Activated CD4-positive, alpha-beta memory T cell treated with anti-CD3 and anti-CD28 coated beads, Interleukin-2, amount 10 ng/mL, durations not matched to agents 7 days and 5 days (primary cell): ENCODE measurements at regions of chr3 and their contacts with region 1.

Region 1: DNA sequence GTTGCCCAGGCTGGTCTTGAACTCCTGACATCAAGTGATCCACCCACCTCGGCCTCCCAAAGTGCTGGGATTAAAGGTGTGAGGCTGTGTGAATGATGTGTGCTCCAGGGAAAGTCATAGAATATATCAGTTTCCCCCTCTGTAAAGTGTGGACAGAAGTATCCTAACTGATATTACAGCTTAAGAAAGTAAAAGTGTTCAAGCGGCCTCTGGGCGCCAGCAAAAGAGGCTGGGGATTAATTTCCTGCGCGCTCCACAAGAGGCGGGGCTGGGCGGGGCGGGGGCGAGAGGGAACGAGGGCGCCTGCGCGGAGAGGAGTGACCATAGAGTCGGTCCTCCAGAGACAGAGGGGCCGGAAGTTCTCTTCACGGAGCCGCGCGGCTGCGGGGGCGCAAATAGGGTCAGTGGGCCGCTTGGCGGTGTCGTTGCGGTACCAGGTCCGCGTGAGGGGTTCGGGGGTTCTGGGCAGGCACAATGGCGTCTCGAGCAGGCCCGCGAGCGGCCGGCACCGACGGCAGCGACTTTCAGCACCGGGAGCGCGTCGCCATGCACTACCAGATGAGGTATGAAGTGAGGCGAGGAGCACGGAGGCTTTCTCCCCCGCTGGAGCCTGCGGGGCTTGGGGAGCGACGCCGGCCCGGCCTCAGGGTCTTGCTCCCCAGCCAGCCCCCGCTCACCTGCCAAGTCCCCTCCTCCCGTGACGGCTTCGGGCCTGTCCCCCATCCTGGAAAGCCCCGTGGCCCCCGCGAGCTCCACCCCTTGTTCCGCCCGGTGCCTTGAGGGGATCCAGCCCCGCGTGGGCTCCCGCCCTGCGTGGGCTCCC is at the start of gene JAGN1:
- DNase-seq: peak; percentile 92
- H3K4me3 Mint-ChIP-seq: peak within 1 kb of the TSS; percentile 99
- H3K27ac Mint-ChIP-seq: peak within 1 kb of the TSS; percentile 92
- H3K4me1 Mint-ChIP-seq: peaks cover 36% of the 10 kb centered on the region
- H3K27me3 Mint-ChIP-seq: no peaks in the 10 kb centered on the region
- total RNA-seq, gene JAGN1: 25.4 to 28.6 TPM

Region 2: GRCh38 chr3:9088441-9089353 is 801.8 kb before region 1 on chr3:
- CTCF ChIA-PET with region 1: no interaction called
- POLR2A ChIA-PET with region 1: no interaction called
- DNase-seq: no peak
- H3K4me3 Mint-ChIP-seq: no peak overlapping the region
- H3K27ac Mint-ChIP-seq: no peak overlapping the region
- H3K4me1 Mint-ChIP-seq: no peaks in the 10 kb centered on the region
- H3K27me3 Mint-ChIP-seq: peaks cover 5% of the 10 kb centered on the region

Region 3: GRCh38 chr3:9843715-9844438 is 46.6 kb before region 1 on chr3 and contains the start of gene RPUSD3:
- CTCF ChIA-PET with region 1: interaction called, 6 read pairs
- POLR2A ChIA-PET with region 1: interaction called, 13 read pairs
- DNase-seq: peak; percentile 97
- H3K4me3 Mint-ChIP-seq: peak within 1 kb of the TSS; percentile 99
- H3K27ac Mint-ChIP-seq: peak within 1 kb of the TSS; percentile 83
- H3K4me1 Mint-ChIP-seq: peaks cover 27% of the 10 kb centered on the region
- H3K27me3 Mint-ChIP-seq: no peaks in the 10 kb centered on the region
- total RNA-seq, gene RPUSD3: 51.5 to 53.6 TPM

Region 4: GRCh38 chr3:9902372-9903237 is 12.1 kb after region 1 on chr3 and contains the start of gene IL17RE:
- CTCF ChIA-PET with region 1: interaction called, 10 read pairs
- POLR2A ChIA-PET with region 1: interaction called, 54 read pairs
- DNase-seq: no peak
- H3K4me3 Mint-ChIP-seq: peak within 1 kb of the TSS; percentile 60
- H3K27ac Mint-ChIP-seq: peak within 1 kb of the TSS; percentile 75
- H3K4me1 Mint-ChIP-seq: peaks cover 35% of the 10 kb centered on the region
- H3K27me3 Mint-ChIP-seq: peaks cover 2% of the 10 kb centered on the region
- total RNA-seq, gene IL17RE: 1.7 to 3.0 TPM

Region 5: GRCh38 chr3:9915254-9916141 is 25.0 kb after region 1 on chr3:
- CTCF ChIA-PET with region 1: interaction called, 3 read pairs
- POLR2A ChIA-PET with region 1: interaction called, 27 read pairs
- DNase-seq: peak; percentile 40
- H3K4me3 Mint-ChIP-seq: peak overlapping the region; percentile 58
- H3K27ac Mint-ChIP-seq: no peak overlapping the region
- H3K4me1 Mint-ChIP-seq: peaks cover 17% of the 10 kb centered on the region
- H3K27me3 Mint-ChIP-seq: peaks cover 14% of the 10 kb centered on the region